GM12878 (cell line): ENCODE measurements at regions of chr17 and their contacts with region 1.

Region 1: DNA sequence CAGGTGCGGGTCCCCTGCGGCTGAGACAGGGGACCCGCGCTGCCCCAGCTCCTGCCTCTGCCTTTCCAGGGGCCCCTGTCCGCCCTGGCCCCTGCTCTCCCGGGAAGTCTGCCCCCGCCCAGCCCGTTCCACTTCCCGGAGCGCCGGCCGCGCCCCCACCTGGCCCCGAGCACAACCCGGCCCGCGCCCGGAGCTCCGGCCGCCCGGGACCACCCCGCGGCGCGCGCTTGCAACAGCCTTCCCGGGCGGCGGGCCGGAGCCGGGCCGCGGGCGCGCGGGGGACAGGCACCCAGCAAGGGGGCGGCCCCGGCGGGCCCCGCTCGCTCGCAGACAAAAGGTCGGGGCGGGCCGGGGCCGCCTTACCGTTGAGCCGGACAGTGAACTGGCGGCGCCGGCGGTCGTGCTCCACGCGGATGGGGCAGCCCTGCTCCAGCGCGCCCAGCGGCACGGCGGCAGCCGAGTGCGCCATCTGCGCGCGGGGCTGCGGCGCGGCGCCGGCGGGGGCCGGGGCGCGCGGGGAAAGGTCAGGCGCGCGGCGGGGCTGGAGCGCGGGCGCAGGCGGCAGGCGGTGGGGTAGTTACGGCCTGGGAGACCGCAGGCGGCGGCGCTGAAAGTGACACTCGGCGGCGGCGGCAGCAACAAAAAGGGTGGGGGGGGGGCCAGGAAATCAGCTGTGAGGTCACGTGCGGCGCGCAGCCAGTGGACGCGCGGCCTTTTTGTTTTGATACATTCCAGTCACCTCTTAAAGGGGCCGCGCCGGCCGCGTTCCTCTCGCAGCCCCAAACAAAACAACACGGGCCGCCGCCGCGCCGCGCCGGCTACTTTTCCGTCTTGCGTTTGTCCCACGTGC is at the start of gene NATD1:
- DNase-seq: no peak
- ATAC-seq: peak; percentile 74
- H3K4me3 ChIP-seq: peak within 1 kb of the TSS; percentile 70
- H3K27ac ChIP-seq: no peak within 1 kb of the TSS
- H3K4me1 ChIP-seq: peaks cover 4% of the 10 kb centered on the region
- H3K27me3 ChIP-seq: peaks cover 2 to 5% of the 10 kb centered on the region in 2 experiments; a peak in 3 of 4 replicates
- CTCF ChIP-seq: no peak
- EP300 ChIP-seq: no peak
- POLR2A ChIP-seq: peak; percentile 56
- RAD21 ChIP-seq: no peak
- polyA plus RNA-seq, gene NATD1: 0.02 TPM

Region 2: GRCh38 chr17:21194703-21195102 is 58.3 kb before region 1 on chr17:
- CTCF ChIA-PET with region 1: no interaction called
- POLR2A ChIA-PET with region 1: no interaction called
- RAD21 ChIA-PET with region 1: no interaction called
- SMC1A ChIA-PET with region 1: no interaction called
- in situ Hi-C with region 1: loop called (anchors 5 kb)
- intact Hi-C with region 1: no loop called
- DNase-seq: no peak
- ATAC-seq: no peak
- H3K4me3 ChIP-seq: no peak overlapping the region
- H3K27ac ChIP-seq: no peak overlapping the region
- H3K4me1 ChIP-seq: peaks cover 2% of the 10 kb centered on the region; the same call in 1 of the 2 replicates
- H3K27me3 ChIP-seq: no peaks in the 10 kb centered on the region
- CTCF ChIP-seq: no peak
- EP300 ChIP-seq: no peak
- POLR2A ChIP-seq: no peak
- RAD21 ChIP-seq: no peak